ENCODE measurements at regions of chr6 and their contacts with region 1.

Region 1: DNA sequence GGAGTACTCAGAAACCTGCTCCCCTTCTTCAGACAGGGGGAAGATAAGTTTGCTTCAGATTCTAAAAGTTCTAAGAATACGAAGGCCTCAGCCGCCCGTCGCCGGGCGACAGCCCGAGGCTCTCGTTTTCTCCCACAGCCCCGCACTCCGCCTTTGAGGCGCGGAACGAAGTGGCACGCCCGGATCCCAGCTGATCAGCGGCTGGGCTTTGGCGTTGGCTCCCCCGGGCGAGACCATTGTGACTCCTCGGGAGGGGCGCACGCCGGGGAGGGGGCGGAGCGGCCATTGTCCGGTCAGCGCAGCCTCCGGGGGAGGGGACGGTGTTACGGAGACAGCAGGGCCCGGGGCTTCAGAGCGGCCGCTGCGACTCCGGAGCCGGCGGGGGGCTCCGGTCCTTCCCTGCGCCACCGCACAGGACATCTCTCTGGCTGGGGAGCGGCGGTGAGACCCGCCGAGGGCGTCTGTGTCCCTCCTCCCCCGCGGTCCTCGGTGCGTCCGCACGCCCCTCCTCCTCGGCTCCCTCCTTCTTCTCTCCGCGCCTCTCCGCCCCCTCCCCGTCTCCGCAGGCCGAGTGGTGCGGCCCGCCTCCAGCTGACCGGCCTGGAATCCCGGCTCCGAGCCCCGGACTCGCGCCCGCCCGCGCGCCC is at the start of gene ZFAND3:
- DNase-seq: peak; percentile 93
- H3K4me3 Mint-ChIP-seq: peak within 1 kb of the TSS; percentile 98
- H3K27ac Mint-ChIP-seq: peak within 1 kb of the TSS; percentile 95
- H3K4me1 Mint-ChIP-seq: peaks cover 42% of the 10 kb centered on the region
- H3K27me3 Mint-ChIP-seq: peaks cover 4% of the 10 kb centered on the region
- total RNA-seq, gene ZFAND3: 30.8 and 34.3 TPM in 2 replicates

Region 2: GRCh38 chr6:37576336-37576813 is 242.9 kb before region 1 on chr6:
- intact Hi-C with region 1: no loop called
- DNase-seq: no peak
- H3K4me3 Mint-ChIP-seq: no peak overlapping the region
- H3K27ac Mint-ChIP-seq: no peak overlapping the region
- H3K4me1 Mint-ChIP-seq: no peaks in the 10 kb centered on the region
- H3K27me3 Mint-ChIP-seq: no peaks in the 10 kb centered on the region

Region 3: GRCh38 chr6:37698261-37699137 is 120.8 kb before region 1 on chr6:
- intact Hi-C with region 1: loop called (anchors 2 kb)
- DNase-seq: peak; percentile 55
- H3K4me3 Mint-ChIP-seq: peak overlapping the region; percentile 99
- H3K27ac Mint-ChIP-seq: peak overlapping the region; percentile 95
- H3K4me1 Mint-ChIP-seq: peaks cover 23% of the 10 kb centered on the region
- H3K27me3 Mint-ChIP-seq: peaks cover 57% of the 10 kb centered on the region

Region 4: DNA sequence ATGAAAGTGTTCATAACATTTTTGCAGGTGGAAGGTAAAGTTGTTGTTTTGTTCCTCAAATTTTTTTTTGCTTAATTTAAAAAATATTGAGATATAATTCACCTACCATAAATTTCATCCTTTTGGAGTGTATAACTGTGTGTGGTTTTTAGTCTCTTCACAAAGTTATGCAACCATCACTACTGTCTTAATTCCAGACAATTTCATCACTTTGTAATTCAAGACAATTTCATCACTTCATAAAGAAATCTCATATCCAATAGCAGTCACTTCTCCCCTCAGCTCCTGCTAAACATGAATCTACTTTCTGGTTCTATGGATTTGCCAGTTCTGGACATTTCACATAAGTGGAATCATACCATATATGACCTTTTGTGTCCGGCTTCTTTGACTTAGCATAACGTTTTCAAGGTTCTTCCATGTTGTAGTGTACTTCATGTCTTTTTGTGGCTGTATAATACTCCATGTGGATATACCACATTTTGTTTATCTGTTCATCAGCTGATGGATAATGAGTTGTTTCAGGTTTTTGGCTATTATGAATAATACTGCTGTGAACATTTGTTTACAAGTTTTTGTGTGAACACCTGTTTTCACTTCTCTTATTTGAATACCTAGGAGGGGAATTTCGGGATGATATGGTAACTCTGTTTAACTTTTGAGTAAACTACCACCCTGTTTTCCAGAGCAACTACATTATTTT is 19.1 kb after region 1 on chr6:
- intact Hi-C with region 1: no loop called
- DNase-seq: no peak
- H3K4me3 Mint-ChIP-seq: no peak overlapping the region
- H3K27ac Mint-ChIP-seq: no peak overlapping the region
- H3K4me1 Mint-ChIP-seq: peaks cover 16% of the 10 kb centered on the region
- H3K27me3 Mint-ChIP-seq: no peaks in the 10 kb centered on the region

Region 5: DNA sequence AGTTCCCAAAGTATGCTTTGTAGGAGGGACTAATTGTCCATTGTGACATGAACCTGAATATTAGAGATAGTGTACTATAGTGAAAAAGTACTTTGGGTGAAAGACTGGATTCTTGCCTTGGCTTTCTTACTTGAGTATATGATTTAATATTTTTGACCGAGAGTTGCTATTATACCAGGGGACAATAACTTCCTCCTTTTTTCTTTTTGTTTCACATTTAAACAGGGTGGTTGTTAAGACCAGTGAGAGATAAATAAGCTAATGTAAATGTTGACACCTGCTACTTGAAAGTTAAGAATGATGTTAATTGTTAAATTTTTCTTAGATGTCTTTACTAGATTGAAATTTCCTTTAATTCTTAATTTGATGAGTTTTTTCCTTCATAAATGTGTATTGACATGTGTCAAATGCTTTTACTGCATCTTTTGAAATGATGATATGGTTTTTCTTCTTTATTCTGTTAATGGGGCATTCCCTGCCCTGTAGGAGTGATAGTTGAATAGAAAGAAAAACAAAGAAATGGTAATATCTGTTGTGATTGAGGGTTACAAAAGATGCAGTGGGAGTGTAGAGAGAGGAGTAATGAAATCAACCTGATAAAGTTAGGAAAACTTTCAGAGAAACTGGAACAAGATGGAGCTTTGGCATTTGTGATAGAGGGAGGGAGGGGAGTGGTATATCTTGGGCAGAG is 48.6 kb after region 1 on chr6:
- intact Hi-C with region 1: loop called (anchors 2 kb)
- DNase-seq: no peak
- H3K4me3 Mint-ChIP-seq: no peak overlapping the region
- H3K27ac Mint-ChIP-seq: peak overlapping the region; percentile 74
- H3K4me1 Mint-ChIP-seq: peaks cover 45% of the 10 kb centered on the region
- H3K27me3 Mint-ChIP-seq: no peaks in the 10 kb centered on the region

Region 6: DNA sequence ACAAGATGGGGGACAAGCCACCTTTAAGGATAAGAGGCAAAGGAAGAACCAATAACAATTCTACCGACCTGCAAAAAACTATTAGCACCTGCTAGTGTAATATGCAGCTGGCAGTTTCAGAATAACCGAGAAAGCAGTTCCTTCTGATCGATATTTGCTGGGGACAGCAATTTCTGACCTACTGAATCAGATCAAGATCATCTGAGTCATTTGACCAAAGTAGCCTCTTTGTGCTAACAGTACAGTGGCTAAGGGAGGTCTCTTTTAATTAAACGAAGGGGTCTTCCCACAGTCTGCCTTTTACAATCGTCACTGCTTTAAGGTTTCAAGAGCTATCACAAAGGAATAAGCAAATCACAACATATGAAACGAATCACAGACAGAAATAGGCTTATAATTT is 501.5 kb after region 1 on chr6:
- intact Hi-C with region 1: no loop called
- DNase-seq: no peak
- H3K4me3 Mint-ChIP-seq: no peak overlapping the region
- H3K27ac Mint-ChIP-seq: no peak overlapping the region
- H3K4me1 Mint-ChIP-seq: no peaks in the 10 kb centered on the region
- H3K27me3 Mint-ChIP-seq: no peaks in the 10 kb centered on the region

Region 7: DNA sequence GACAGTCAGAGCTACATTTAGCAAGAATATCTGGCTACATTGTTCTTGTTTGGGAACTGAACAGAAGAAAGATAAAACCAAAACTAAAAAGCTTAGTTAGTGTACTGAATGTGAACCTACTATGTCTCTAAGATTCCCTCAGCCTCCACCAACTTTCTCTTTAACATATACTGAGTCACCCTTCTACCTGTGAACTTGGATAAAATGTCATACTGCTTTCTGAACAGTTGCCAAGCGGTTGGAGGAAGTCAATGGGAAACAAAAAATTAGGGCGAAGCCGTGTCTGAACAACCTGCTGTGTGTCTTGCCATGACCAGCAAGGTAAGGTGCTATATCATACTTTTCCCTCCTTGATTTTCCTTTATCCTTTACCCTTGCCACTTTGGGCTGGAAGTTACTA is 576.9 kb after region 1 on chr6:
- intact Hi-C with region 1: no loop called
- DNase-seq: no peak
- H3K4me3 Mint-ChIP-seq: no peak overlapping the region
- H3K27ac Mint-ChIP-seq: no peak overlapping the region
- H3K4me1 Mint-ChIP-seq: no peaks in the 10 kb centered on the region
- H3K27me3 Mint-ChIP-seq: no peaks in the 10 kb centered on the region